Naive thymus-derived CD4-positive, alpha-beta T cell (primary cell): ENCODE measurements at regions of chr2 and their contacts with region 1.

Region 1: DNA sequence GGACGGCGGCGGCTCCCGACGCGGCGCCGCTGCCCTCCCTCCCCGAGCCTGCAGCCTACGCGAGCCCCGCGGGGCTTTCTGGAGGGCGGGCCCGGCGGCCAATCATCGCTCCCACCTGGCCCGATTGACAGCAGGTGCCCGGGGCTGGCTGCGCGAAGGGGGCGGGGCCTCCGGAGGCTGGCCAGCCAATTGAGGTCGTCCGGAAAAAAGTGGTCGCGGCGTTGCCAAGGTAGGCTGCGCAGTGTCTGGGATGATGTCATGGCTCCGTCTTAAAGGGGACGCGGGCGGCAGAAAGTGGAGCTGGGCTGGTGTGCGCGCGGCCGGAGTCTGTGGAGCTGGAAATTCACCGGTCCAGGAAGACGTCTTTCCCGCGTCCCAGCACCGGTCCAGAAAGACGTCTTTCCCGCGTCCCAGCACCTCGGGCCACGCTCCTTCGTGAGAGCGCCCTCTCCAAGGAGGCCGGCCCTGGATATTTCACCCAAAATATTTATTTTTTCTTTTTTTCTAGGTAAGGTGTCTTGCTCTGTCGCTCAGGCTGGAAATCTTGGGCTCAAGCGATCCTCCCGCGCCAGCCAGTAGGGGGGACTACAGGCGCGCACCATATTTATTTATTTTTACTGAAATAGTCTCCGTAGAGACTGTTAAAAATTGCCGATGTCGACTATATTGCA is at the start of gene ACTR1B:
- DNase-seq: peak; percentile 95 to 99 (median 98)
- ATAC-seq: peak; percentile 92
- H3K4me3 ChIP-seq: peak within 1 kb of the TSS; percentile 89
- H3K4me3 Mint-ChIP-seq: peak within 1 kb of the TSS; percentile 93 to 99 (median 96)
- H3K27ac ChIP-seq: peak within 1 kb of the TSS; percentile 98
- H3K27ac Mint-ChIP-seq: peak within 1 kb of the TSS; percentile 96 to 99 (median 98)
- H3K4me1 ChIP-seq: peaks cover 16 to 25% of the 10 kb centered on the region in 2 donors
- H3K4me1 Mint-ChIP-seq: peaks cover 15 to 48% (median 36%) of the 10 kb centered on the region in 7 donors
- H3K27me3 ChIP-seq: no peaks in the 10 kb centered on the region
- H3K27me3 Mint-ChIP-seq: no peaks in the 10 kb centered on the region
- total RNA-seq, gene ACTR1B: 75.9 to 95.5 (median 89.5) TPM

Region 2: DNA sequence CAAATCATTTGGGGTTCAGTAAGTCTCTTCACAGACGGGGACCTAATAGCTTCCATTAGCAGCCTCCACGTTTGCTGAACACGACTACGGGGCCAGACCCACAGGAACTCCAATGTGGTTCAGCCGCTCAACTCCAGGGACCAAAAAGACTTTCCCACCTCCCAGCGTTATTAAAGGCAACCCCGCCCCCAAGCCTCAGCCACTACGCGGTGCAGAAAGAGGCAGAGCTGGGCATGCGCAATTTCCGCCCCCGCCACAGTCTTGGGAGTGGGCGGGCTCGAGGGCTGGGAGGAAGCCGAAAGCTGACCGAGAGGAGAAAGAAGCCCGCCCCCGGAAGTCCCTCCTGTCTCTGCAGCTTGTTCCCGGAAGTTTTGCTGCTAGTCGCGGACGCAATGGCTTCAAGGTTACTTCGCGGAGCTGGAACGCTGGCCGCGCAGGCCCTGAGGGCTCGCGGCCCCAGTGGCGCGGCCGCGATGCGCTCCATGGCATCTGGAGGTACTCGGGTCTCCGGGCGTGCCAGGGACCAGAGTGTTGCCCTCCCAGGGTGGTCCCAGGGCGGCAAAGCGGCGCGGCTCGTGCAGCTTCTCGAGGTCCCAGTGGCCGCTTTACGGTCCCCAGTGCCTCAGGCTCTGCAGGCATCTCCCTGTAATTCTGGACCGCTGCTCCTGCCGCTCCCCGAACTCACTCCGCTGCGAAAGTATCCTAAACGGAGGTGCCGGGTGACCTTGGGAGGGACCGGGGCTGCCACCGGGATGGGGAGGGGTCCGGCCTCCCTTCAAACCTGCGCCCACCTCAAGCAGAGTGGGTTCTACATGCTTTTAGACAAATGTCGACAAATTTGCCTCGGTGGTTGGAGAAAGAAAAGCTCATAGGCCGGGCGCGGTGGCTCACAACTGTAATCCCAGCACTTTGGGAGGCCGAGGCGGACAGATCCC is 18.1 kb before region 1 on chr2 and contains the start of gene COX5B:
- CTCF ChIA-PET with region 1: interaction called, 10 read pairs
- POLR2A ChIA-PET with region 1: interaction called, 162 read pairs
- intact Hi-C with region 1: loop called (anchors 1 kb)
- DNase-seq: peak; percentile 91 to 99 (median 98)
- ATAC-seq: peak; percentile 99
- H3K4me3 ChIP-seq: peak within 1 kb of the TSS; percentile 99
- H3K4me3 Mint-ChIP-seq: peak within 1 kb of the TSS; percentile 86 to 97 (median 94)
- H3K27ac ChIP-seq: peak within 1 kb of the TSS; percentile 97
- H3K27ac Mint-ChIP-seq: peak within 1 kb of the TSS; percentile 91 to 99 (median 98)
- H3K4me1 ChIP-seq: peaks cover 15 to 17% of the 10 kb centered on the region in 2 donors
- H3K4me1 Mint-ChIP-seq: peaks cover 15 to 32% (median 26%) of the 10 kb centered on the region in 7 donors
- H3K27me3 ChIP-seq: no peaks in the 10 kb centered on the region
- H3K27me3 Mint-ChIP-seq: no peaks in the 10 kb centered on the region
- total RNA-seq, gene COX5B: 111 to 213 (median 122) TPM

Region 3: GRCh38 chr2:97697252-97698235 is 33.4 kb after region 1 on chr2:
- CTCF ChIA-PET with region 1: interaction called, 13 read pairs
- POLR2A ChIA-PET with region 1: interaction called, 3 read pairs
- intact Hi-C with region 1: loop called (anchors 1 kb)
- DNase-seq: peak; percentile 78 to 94 (median 87)
- ATAC-seq: peak; percentile 95
- H3K4me3 ChIP-seq: no peak overlapping the region
- H3K4me3 Mint-ChIP-seq: peak overlapping the region in 4 of 10 donors; percentile 19 to 59 (median 23)
- H3K27ac ChIP-seq: no peak overlapping the region
- H3K27ac Mint-ChIP-seq: peak overlapping the region in 2 of 9 donors; percentile 30 to 46
- H3K4me1 ChIP-seq: no peaks in the 10 kb centered on the region
- H3K4me1 Mint-ChIP-seq: peaks cover 4 to 16% (median 13%) of the 10 kb centered on the region in 7 donors
- H3K27me3 ChIP-seq: no peaks in the 10 kb centered on the region
- H3K27me3 Mint-ChIP-seq: peaks cover 0 to 6% (median 0%) of the 10 kb centered on the region in 5 donors

Region 4: DNA sequence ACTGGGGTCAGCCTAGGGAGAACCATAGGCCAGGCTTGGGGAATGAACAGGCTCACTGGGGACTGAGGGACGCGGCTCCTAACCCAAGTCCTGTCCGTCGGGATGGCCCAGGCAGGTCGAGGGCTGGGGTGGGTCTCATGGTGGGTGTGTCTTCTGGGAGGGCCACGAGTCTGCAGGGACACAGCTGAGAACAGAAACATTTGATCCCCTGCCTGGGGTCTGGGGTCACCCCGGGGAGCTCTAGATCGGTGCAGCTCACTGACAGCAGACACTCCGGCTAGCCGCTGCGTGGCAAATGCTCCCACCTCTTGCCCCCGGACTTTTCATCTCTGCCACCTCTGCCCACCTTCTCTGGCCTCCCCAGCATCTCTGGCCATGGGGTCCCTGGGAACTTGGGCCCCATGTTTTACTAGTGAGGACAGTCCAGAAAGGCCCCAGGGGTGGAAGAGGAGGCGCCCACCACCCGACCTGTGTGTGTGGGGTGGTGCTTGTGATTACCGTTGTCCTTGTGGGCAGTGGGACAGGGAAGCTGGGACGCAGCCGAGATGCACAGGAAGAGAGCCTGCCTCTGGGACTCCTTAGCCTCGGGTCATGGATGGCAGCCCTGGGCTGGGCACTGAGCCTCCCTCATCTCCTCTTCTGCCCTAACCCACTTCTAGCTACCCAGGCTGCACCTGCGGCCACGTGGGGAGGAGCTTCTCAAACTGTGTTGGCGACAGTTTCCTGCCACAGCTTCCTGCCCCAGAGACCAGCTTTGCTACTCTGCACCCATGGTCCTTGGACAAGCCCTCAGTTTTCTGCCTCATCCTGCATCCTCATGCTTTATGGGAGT is 54.2 kb after region 1 on chr2:
- CTCF ChIA-PET with region 1: interaction called, 5 read pairs
- POLR2A ChIA-PET with region 1: interaction called, 12 read pairs
- intact Hi-C with region 1: loop called in 1 of 2 experiments (anchors 1 kb)
- DNase-seq: peak in 8 of 9 donors; percentile 66 to 74 (median 69)
- ATAC-seq: peak; percentile 87
- H3K4me3 ChIP-seq: peak overlapping the region; percentile 68
- H3K4me3 Mint-ChIP-seq: peak overlapping the region; percentile 86 to 100 (median 94)
- H3K27ac ChIP-seq: peak overlapping the region; percentile 95
- H3K27ac Mint-ChIP-seq: peak overlapping the region; percentile 89 to 100 (median 97)
- H3K4me1 ChIP-seq: peaks cover 73 to 77% of the 10 kb centered on the region in 2 donors
- H3K4me1 Mint-ChIP-seq: peaks cover 64 to 91% (median 75%) of the 10 kb centered on the region in 7 donors
- H3K27me3 ChIP-seq: no peaks in the 10 kb centered on the region
- H3K27me3 Mint-ChIP-seq: no peaks in the 10 kb centered on the region

Region 5: DNA sequence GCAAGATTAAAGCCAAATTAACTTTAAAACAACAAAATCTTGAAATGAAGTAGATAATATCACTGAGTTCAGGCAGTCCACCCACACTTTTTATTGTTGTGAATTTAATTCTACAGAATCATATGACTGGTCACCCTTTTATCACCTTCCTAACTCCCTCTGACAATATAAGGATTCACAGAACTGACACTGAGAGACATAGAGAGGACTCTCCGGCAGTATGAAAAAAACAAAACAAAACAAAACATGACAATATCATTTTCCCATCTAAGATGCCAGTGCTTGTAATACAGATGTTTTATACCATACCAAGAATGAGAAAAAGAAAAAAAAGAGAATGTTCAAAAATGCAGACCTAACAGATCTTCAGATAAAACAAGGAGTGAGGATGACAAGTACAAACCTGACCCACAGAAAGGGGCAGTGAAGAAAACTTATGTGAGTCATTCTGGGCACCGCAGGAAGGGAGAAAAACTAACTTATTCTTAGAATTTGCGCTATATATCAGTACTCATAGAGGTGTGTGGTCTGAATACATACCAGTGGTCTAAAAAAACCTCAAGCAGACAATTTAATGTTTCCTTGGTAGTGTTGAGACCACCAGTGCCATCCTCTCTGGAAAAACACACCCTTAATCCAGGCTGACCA is 185.9 kb after region 1 on chr2:
- CTCF ChIA-PET with region 1: no interaction called
- POLR2A ChIA-PET with region 1: no interaction called
- intact Hi-C with region 1: no loop called
- DNase-seq: no peak
- ATAC-seq: no peak
- H3K4me3 ChIP-seq: no peak overlapping the region
- H3K4me3 Mint-ChIP-seq: peak overlapping the region in 1 of 10 donors; percentile 26
- H3K27ac ChIP-seq: no peak overlapping the region
- H3K27ac Mint-ChIP-seq: peak overlapping the region in 2 of 9 donors; percentile 0 to 7
- H3K4me1 ChIP-seq: peaks cover 0 to 12% of the 10 kb centered on the region in 2 donors
- H3K4me1 Mint-ChIP-seq: peaks cover 37 to 69% (median 62%) of the 10 kb centered on the region in 7 donors
- H3K27me3 ChIP-seq: no peaks in the 10 kb centered on the region
- H3K27me3 Mint-ChIP-seq: no peaks in the 10 kb centered on the region

Region 6: DNA sequence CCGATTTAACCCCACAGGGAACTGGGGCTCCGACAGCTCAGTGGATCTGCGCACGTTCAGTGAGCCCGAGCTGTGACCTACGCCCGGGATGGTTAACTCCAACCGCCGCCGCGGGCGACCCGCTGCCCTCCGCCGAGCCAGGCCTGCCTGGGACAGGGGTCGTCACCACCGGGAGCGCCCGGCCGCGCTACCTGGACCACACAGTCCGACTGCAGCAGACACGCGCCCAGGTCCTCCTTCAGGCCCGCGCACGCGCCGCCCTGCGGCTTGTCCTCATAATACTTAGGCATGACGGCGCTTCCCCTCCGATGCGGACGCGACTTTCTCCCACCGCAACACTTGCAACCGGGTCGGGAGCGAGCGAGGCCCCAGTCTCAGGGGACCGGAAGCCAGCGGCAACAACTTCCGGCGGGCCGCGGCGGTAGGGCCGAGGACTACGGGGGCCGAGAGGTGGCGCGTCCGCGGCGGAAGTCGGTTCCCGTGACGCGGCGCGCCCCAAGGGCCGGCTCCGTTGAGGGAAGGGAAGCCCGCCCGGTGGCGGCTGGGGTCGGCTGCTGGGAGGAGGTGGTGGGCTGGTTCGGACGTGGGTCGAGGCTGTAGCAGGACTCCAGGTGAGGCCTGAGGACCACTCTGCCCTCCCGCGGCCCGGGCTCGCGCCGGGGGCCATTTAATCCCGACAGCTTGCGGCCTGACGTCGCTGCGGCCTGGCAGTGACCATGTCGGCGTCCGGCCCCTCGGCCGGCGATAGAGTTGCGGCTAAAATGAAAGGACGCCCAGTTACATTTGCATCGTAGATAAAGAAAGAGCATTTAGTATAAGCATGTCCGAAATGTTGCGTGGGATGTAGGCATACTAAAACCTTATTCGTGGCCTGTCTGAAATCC is 944.3 kb after region 1 on chr2 and contains the starts of genes COA5 and UNC50:
- CTCF ChIA-PET with region 1: no interaction called
- POLR2A ChIA-PET with region 1: no interaction called
- intact Hi-C with region 1: loop called in 1 of 2 experiments (anchors 5 kb)
- DNase-seq: peak; percentile 82 to 94 (median 87)
- ATAC-seq: peak; percentile 93
- H3K4me3 ChIP-seq: peak within 1 kb of the TSS; percentile 94
- H3K4me3 Mint-ChIP-seq: peak within 1 kb of the TSS; percentile 82 to 97 (median 90)
- H3K27ac ChIP-seq: peak within 1 kb of the TSS; percentile 97
- H3K27ac Mint-ChIP-seq: peak within 1 kb of the TSS; percentile 81 to 97 (median 92)
- H3K4me1 ChIP-seq: peaks cover 39 to 48% of the 10 kb centered on the region in 2 donors
- H3K4me1 Mint-ChIP-seq: peaks cover 51 to 82% (median 70%) of the 10 kb centered on the region in 7 donors
- H3K27me3 ChIP-seq: no peaks in the 10 kb centered on the region
- H3K27me3 Mint-ChIP-seq: no peaks in the 10 kb centered on the region
- total RNA-seq, gene COA5: 23.8 to 55.2 (median 29.2) TPM
- total RNA-seq, gene UNC50: 22.2 to 41.3 (median 29.9) TPM